ENCODE measurements at regions of chr12 and their contacts with region 1.

Region 1: GRCh38 chr12:76976777-76977382 is 88.5 kb downstream of the E2F7 start:
- DNase-seq: no peak
- ATAC-seq: no peak
- H3K4me3 ChIP-seq: no peak overlapping the region
- H3K27ac ChIP-seq: no peak overlapping the region
- H3K4me1 ChIP-seq: no peaks in the 10 kb centered on the region
- H3K27me3 ChIP-seq: no peaks in the 10 kb centered on the region
- CTCF ChIP-seq: no peak
- POLR2A ChIP-seq: no peak

Region 2: GRCh38 chr12:76636121-76636692 is 340.7 kb before region 1 on chr12:
- in situ Hi-C with region 1: loop called in 1 of 4 experiments (anchors 25 kb)
- intact Hi-C with region 1: no loop called
- DNase-seq: no peak
- ATAC-seq: no peak
- H3K4me3 ChIP-seq: no peak overlapping the region
- H3K27ac ChIP-seq: no peak overlapping the region
- H3K4me1 ChIP-seq: no peaks in the 10 kb centered on the region
- H3K27me3 ChIP-seq: no peaks in the 10 kb centered on the region
- CTCF ChIP-seq: no peak
- POLR2A ChIP-seq: no peak

Region 3: GRCh38 chr12:77087427-77087826 is 110.5 kb after region 1 on chr12:
- in situ Hi-C with region 1: loop called in 1 of 4 experiments (anchors 25 kb)
- intact Hi-C with region 1: no loop called
- DNase-seq: no peak
- ATAC-seq: no peak
- H3K4me3 ChIP-seq: no peak overlapping the region
- H3K27ac ChIP-seq: no peak overlapping the region
- H3K4me1 ChIP-seq: no peaks in the 10 kb centered on the region
- H3K27me3 ChIP-seq: no peaks in the 10 kb centered on the region
- CTCF ChIP-seq: no peak
- POLR2A ChIP-seq: no peak

Region 4: GRCh38 chr12:77179515-77179914 is 202.6 kb after region 1 on chr12:
- in situ Hi-C with region 1: no loop called
- intact Hi-C with region 1: no loop called
- DNase-seq: no peak
- ATAC-seq: no peak
- H3K4me3 ChIP-seq: no peak overlapping the region
- H3K27ac ChIP-seq: no peak overlapping the region
- H3K4me1 ChIP-seq: no peaks in the 10 kb centered on the region
- H3K27me3 ChIP-seq: no peaks in the 10 kb centered on the region
- CTCF ChIP-seq: no peak
- POLR2A ChIP-seq: no peak

Measured in gastrocnemius medialis (tissue), 4 donors.